AG04450 (cell line): ENCODE measurements at regions of chr7 and their contacts with region 1.

Region 1: DNA sequence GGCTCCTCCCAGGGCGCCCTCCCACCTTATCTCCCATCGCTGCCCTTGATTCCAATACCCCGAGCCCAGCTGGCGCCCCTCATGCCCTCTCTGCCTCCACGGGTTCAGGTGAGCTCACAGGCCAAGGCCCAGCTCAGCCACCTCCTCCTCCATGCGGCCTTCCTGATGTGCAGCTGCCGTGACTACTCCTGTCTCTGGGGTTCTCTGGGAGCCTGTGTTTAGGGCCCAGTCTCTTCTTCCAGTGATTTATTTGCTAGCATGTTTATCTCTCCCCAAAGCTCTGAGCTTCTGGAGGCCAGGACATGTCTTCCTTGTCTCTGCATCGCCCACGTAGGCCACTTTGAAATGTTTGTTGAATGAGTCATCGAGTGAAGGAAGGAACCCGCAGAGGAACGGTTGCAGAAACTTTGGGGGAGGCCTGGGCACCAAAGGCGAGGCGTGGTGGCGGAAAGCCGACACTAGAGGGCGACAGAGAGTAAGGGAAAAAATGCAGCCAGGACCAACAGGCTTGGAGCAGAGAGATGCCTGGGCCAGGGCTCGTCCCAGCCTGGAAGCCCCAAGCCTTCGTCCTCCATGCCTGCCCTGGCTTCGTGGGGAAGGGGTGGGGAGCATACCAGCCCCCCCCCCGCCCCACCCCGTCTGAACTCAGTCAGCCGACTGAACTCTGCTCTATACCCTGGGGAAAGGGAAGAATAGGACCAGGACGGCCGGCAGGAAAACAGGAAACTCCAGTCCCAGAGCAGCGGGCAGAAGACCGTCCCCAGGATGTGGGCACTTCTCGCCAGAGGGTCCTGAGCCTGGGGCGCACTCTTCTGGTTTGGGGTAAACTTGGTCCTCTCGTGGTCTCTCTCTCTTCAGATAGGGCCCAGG is 10.9 kb upstream of the HSPB1 start:
- DNase-seq: peak; percentile 96
- H3K4me3 ChIP-seq: peak overlapping the region; percentile 41
- H3K27ac ChIP-seq: peak overlapping the region; percentile 92
- H3K27me3 ChIP-seq: no peaks in the 10 kb centered on the region
- CTCF ChIP-seq: peak; percentile 96

Region 2: DNA sequence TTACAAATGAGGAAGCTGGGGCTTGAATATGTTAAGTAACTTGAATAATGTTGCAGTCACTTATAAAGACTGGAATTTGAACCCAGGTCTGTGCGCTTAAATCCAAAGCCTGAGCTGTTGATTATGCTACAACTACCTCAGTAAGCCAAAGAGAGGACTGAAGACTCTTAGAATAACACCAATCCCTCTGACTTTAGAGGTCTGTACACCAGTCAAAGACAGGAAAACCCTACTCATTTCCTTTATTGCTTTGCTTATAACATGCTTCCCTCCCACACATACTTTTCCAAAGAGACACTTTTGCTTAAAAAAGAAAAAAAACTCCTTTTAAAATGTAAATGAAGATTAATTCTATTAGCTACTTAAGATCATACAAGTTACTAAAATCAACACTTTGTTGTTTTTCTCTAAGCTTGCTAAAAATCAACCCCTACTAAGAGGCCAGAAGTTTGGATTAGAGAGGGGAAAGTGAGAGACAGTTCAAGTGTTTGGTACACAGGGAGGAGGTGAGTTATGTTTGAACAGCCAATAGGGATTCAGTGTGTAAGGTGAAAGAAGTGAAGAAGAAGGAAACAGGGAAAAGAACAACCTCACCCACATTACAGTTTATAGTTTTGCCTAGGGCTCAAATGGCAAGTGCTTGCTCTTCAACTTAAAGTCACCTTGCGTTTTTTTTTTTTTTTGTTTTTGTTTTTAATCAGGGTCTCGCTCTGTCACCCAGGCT is 168.9 kb before region 1 on chr7:
- CTCF ChIA-PET with region 1: interaction called, 10 read pairs
- POLR2A ChIA-PET with region 1: no interaction called
- DNase-seq: no peak
- H3K4me3 ChIP-seq: no peak overlapping the region
- H3K27ac ChIP-seq: no peak overlapping the region
- H3K27me3 ChIP-seq: no peaks in the 10 kb centered on the region
- CTCF ChIP-seq: no peak

Region 3: DNA sequence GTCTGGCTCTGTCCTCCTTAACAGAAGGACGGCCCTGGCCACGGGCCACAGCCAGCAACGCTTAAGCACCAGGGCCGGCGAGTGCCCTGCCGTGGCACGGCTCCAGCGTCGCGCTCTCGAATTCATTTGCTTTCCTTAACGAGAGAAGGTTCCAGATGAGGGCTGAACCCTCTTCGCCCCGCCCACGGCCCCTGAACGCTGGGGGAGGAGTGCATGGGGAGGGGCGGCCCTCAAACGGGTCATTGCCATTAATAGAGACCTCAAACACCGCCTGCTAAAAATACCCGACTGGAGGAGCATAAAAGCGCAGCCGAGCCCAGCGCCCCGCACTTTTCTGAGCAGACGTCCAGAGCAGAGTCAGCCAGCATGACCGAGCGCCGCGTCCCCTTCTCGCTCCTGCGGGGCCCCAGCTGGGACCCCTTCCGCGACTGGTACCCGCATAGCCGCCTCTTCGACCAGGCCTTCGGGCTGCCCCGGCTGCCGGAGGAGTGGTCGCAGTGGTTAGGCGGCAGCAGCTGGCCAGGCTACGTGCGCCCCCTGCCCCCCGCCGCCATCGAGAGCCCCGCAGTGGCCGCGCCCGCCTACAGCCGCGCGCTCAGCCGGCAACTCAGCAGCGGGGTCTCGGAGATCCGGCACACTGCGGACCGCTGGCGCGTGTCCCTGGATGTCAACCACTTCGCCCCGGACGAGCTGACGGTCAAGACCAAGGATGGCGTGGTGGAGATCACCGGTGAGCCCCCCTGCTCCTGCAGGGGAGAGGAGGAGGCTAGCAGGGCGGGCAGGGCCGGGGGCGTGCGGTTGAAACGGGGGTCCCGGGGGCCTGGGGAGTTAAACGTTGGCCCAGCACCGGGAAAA is 11.0 kb after region 1 on chr7 and contains the start of gene HSPB1:
- CTCF ChIA-PET with region 1: interaction called, 10 read pairs
- POLR2A ChIA-PET with region 1: interaction called, 23 read pairs
- DNase-seq: peak; percentile 69
- H3K4me3 ChIP-seq: peak within 1 kb of the TSS; percentile 97
- H3K27ac ChIP-seq: peak within 1 kb of the TSS; percentile 75
- H3K27me3 ChIP-seq: no peaks in the 10 kb centered on the region
- CTCF ChIP-seq: no peak
- polyA plus RNA-seq, gene HSPB1: 290 and 526 TPM in 2 replicates

Region 4: GRCh38 chr7:76314042-76314721 is 22.6 kb after region 1 on chr7:
- CTCF ChIA-PET with region 1: interaction called, 40 read pairs
- POLR2A ChIA-PET with region 1: interaction called, 12 read pairs
- DNase-seq: peak; percentile 84
- H3K4me3 ChIP-seq: no peak overlapping the region
- H3K27ac ChIP-seq: no peak overlapping the region
- H3K27me3 ChIP-seq: no peaks in the 10 kb centered on the region
- CTCF ChIP-seq: peak; percentile 100

Region 5: GRCh38 chr7:76327610-76328009 is 36.0 kb after region 1 on chr7:
- CTCF ChIA-PET with region 1: interaction called, 12 read pairs
- POLR2A ChIA-PET with region 1: no interaction called
- DNase-seq: no peak
- H3K4me3 ChIP-seq: no peak overlapping the region
- H3K27ac ChIP-seq: no peak overlapping the region
- H3K27me3 ChIP-seq: no peaks in the 10 kb centered on the region
- CTCF ChIP-seq: no peak

Region 6: GRCh38 chr7:76364198-76364584 is 72.6 kb after region 1 on chr7:
- CTCF ChIA-PET with region 1: no interaction called
- POLR2A ChIA-PET with region 1: no interaction called
- DNase-seq: no peak
- H3K4me3 ChIP-seq: 0 out of 2 replicates have a peak overlapping the region, but pooled peaks have one; percentile 3
- H3K27ac ChIP-seq: peak overlapping the region; percentile 95
- H3K27me3 ChIP-seq: no peaks in the 10 kb centered on the region
- CTCF ChIP-seq: no peak